ENCODE measurements at regions of chr2 and their contacts with region 1.

Region 1: DNA sequence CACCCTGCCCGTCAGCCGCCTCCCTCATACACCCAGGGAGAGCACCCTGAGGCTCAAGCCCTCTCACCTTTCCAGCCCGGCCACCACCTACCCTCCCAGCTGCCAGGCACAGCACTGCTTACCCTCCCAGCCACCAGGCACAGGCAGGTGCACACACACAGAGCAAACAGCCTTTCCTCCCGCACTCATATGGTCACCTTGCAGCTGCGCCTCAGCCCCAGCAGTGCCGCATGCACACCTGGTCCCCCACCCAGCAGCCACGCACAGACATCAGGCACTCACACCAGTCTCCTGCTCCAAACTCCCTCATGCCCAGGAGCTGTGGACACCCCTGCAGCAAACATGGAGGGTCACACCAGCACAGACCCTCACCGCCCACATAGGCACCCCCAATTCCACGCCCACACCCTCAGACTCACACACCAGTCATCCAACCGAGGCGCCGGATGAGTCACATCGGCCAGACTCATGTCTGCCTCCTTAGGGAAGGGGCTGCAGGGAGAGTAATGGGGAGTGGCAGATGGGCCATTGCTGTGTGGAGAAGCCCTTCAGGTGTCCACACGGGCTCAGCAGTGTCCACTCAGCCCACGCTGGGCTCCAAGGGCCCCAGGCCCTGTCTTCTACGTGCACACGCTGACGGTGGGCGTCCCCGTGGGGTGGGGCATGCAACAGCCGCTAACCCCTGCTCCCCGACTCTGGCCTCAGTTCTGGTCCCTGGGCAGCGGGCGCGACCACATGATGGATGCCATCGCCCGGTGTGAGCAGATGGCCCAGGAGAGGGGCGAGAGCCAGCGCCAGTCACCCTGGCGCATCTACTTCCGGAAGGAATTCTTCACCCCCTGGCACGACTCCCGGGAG is 22.3 kb upstream of the GPR17 start:
- DNase-seq: no peak
- ATAC-seq: no peak
- H3K4me3 ChIP-seq: no peak overlapping the region
- H3K27ac ChIP-seq: no peak overlapping the region
- H3K4me1 ChIP-seq: no peaks in the 10 kb centered on the region
- H3K27me3 ChIP-seq: no peaks in the 10 kb centered on the region
- CTCF ChIP-seq: no peak

Region 2: DNA sequence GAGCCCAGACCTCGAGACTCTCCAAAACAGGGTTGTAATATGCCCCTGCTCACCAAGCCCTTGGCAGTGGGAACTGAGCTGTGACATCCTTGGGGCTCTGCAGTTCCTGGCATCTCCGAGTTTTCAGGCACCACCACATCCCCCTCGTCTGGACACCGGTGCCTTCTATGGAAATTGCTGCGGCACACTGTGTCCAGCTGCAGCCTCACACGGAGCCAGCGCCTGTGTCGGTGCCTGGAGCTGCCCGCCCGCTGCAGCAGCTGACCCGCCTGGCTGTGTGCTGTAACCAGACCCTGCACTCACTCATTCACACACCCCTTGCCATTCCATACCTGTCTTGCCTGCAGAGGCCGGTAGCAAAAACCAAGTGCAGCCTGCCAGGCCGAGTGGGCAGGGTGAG is 109.1 kb before region 1 on chr2:
- CTCF ChIA-PET with region 1: interaction called, 11 read pairs
- POLR2A ChIA-PET with region 1: no interaction called
- in situ Hi-C with region 1: no loop called
- intact Hi-C with region 1: no loop called
- DNase-seq: no peak
- ATAC-seq: no peak
- H3K4me3 ChIP-seq: no peak overlapping the region
- H3K27ac ChIP-seq: no peak overlapping the region
- H3K4me1 ChIP-seq: peaks cover 20% of the 10 kb centered on the region
- H3K27me3 ChIP-seq: no peaks in the 10 kb centered on the region
- CTCF ChIP-seq: no peak

Measured in Panc1 (cell line).